ENCODE measurements at regions of chr2 and their contacts with region 1.

Region 1: DNA sequence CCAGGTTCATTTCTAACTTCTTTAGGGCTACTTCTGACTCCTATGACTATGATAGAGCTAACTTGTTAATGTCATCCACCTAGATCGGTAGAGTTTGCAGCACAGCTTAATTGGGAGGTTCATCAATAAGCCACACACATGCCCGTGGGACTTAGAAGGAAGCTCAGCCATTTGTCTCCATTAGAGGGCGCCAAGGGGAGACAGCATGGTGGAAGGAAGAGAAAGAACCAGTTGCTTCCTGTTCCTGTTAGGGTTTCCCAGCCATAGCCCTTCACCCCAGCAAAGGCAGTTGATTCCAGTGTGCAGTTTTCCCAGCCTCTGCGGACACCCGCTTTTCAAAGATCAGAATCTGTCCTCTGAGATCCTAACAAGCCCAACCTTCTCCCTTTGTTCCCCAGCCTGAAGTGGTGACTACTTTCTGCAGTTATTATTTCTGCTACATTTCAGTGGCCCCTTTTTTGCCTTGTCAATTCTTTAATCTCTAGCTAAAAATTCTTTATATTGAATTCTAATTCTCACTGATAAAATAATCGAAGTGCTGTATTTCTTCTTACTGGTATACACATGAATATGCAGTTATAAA is 30.3 kb downstream of the MAIP1 start:
- DNase-seq: peak; percentile 86
- ATAC-seq: peak; percentile 90
- H3K4me3 ChIP-seq: no peak overlapping the region
- H3K27ac ChIP-seq: no peak overlapping the region
- H3K4me1 ChIP-seq: no peaks in the 10 kb centered on the region; the same call in 1 of the 2 replicates
- H3K27me3 ChIP-seq: no peaks in the 10 kb centered on the region
- CTCF ChIP-seq: peak; percentile 88

Region 2: DNA sequence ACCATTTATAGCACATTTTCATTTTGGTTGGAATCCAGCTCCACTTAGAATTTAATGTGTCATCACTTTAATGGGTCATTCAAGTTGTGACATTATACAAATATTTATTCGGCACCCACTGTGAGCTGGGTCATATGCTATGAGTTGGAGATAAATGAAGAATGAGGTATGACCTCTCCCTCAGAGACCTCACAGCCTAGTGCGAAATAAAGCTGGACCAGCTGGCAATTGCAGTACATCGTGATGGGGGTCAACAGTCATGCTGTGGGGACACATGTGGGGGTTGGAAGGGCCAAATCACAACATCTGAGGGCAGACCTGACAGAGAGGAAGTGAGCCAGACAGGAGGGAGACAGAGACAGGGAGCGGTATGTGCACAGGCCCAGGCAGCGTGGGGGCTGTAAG is 145.0 kb after region 1 on chr2:
- CTCF ChIA-PET with region 1: no interaction called
- POLR2A ChIA-PET with region 1: no interaction called
- intact Hi-C with region 1: loop called (anchors 10 kb)
- DNase-seq: peak; percentile 82
- ATAC-seq: peak; percentile 83
- H3K4me3 ChIP-seq: no peak overlapping the region
- H3K27ac ChIP-seq: peak overlapping the region; percentile 85
- H3K4me1 ChIP-seq: peaks cover 31% of the 10 kb centered on the region
- H3K27me3 ChIP-seq: no peaks in the 10 kb centered on the region
- CTCF ChIP-seq: no peak

Region 3: GRCh38 chr2:200703127-200703925 is 717.6 kb after region 1 on chr2:
- CTCF ChIA-PET with region 1: no interaction called
- POLR2A ChIA-PET with region 1: no interaction called
- intact Hi-C with region 1: no loop called
- DNase-seq: peak; percentile 92
- ATAC-seq: peak; percentile 84
- H3K4me3 ChIP-seq: peak overlapping the region; percentile 33; the same call in 1 of the 2 replicates
- H3K27ac ChIP-seq: no peak overlapping the region
- H3K4me1 ChIP-seq: peaks cover 18% of the 10 kb centered on the region
- H3K27me3 ChIP-seq: no peaks in the 10 kb centered on the region
- CTCF ChIP-seq: peak; percentile 84